GM10248 (cell line): ENCODE measurements at regions of chr7 and their contacts with region 1.

Region 1: DNA sequence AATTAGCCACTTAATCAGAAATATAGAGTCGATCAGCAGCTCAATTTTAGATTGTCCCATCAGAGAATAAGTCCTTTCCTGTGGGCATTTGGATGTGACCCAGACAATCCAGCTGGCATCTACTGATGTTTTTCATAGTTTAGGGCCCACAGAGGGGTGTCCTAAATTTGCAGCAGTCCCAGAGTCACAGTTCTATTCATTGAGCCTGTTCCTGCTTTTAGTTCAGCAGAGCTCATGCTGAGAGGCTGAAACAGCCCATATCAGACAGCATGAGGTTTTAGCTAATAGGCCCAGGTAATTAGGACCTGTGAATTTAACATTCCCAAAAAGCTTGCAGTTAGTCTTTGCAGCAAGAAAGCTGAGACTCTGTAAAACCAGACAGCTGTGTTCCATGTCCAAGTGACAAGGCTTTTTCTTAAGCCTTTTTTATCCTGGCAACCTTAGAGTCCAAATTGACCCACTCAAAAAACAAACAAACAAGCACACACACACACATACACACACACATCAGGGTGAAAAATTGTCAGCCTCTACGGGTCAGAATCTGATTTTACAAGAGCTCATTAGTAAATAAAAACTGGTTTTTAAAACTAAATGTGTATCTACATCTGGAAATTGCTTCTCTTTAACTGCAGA is 33.7 kb downstream of the ANKIB1 start:
- DNase-seq: no peak
- CTCF ChIP-seq: no peak

Region 2: DNA sequence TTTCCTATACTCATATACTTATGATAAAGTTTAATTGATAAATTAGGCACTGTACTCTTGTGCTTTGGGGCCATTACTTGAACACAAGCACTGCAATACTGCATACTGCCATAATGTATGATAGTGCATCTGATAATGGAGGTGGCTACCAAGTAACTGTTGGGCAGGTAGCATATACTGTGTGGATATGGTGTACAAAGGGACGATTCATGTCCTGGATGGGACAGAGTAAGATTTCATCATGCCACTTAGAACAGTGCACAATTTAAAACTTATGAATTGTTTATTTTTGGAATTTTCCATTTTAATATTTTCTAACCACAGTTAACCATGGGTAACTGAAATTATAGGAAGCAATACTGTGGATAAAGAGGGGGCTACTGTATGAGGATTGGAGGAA is 299.9 kb before region 1 on chr7:
- CTCF ChIA-PET with region 1: no interaction called
- POLR2A ChIA-PET with region 1: no interaction called
- DNase-seq: no peak
- CTCF ChIP-seq: no peak

Region 3: GRCh38 chr7:92292981-92293380 is 13.5 kb after region 1 on chr7:
- CTCF ChIA-PET with region 1: interaction called, 10 read pairs
- POLR2A ChIA-PET with region 1: no interaction called
- DNase-seq: no peak
- CTCF ChIP-seq: no peak